ENCODE measurements at regions of chrX and their contacts with region 1.

Region 1: DNA sequence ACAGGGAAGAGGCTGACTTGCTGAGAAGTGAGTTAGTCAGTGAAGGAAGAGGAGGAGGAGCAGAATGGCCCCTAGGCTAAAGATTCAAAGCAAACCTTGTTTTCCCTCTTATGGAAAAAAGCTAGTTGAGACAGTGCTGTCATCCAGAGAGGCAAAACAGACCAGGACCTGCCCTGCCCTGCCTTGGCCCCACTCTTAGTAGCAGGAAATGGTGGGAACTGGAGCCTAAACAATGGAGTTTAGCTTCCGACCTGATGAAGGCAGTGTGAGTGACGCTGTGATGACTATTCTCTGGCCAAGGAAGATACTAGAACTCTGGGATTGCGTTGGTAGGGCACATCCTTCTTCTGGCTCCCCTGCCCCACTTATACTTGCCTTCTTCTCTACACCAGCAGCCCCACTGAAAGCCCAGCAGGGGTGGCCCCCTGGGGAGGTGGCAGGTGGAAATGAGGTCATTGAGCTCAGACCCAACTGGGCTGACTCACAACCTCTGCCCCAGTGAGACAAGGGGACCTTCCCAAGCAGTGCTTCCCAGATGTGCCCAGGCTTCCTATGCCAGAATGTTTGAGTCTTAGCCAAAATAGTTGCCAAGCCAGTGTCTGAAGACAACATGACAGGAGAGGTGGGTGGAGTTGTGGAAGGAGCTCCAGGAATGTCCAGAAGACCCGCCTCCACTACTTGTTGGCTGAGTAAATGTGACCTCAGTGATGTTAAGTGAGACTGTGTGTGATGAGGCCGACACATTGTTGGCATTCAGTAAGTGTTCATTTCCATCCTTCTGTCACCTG is 38.8 kb downstream of the MSN start:
- DNase-seq: peak in 1 of 5 donors; percentile 75
- H3K4me3 ChIP-seq: peak overlapping the region in 1 of 2 donors; percentile 15
- H3K4me3 Mint-ChIP-seq: peak overlapping the region in 7 of 8 donors; percentile 32 to 82 (median 63)
- H3K27ac ChIP-seq: peak overlapping the region; percentile 61
- H3K27ac Mint-ChIP-seq: peak overlapping the region; percentile 85 to 97 (median 92)
- H3K4me1 ChIP-seq: peaks cover 71% of the 10 kb centered on the region
- H3K4me1 Mint-ChIP-seq: peaks cover 51 to 82% (median 68%) of the 10 kb centered on the region in 4 donors
- H3K27me3 ChIP-seq: no peaks in the 10 kb centered on the region
- H3K27me3 Mint-ChIP-seq: no peaks in the 10 kb centered on the region

Region 2: GRCh38 chrX:65601530-65602220 is 104.6 kb before region 1 on chrX:
- CTCF ChIA-PET with region 1: interaction called, 14 read pairs
- POLR2A ChIA-PET with region 1: interaction called, 11 read pairs
- intact Hi-C with region 1: no loop called
- DNase-seq: peak; percentile 47 to 75 (median 60)
- H3K4me3 ChIP-seq: no peak overlapping the region
- H3K4me3 Mint-ChIP-seq: peak overlapping the region; percentile 45 to 89 (median 70)
- H3K27ac ChIP-seq: peak overlapping the region; percentile 42
- H3K27ac Mint-ChIP-seq: peak overlapping the region; percentile 89 to 96 (median 93)
- H3K4me1 ChIP-seq: peaks cover 74% of the 10 kb centered on the region
- H3K4me1 Mint-ChIP-seq: peaks cover 46 to 89% (median 73%) of the 10 kb centered on the region in 4 donors
- H3K27me3 ChIP-seq: no peaks in the 10 kb centered on the region
- H3K27me3 Mint-ChIP-seq: no peaks in the 10 kb centered on the region

Region 3: DNA sequence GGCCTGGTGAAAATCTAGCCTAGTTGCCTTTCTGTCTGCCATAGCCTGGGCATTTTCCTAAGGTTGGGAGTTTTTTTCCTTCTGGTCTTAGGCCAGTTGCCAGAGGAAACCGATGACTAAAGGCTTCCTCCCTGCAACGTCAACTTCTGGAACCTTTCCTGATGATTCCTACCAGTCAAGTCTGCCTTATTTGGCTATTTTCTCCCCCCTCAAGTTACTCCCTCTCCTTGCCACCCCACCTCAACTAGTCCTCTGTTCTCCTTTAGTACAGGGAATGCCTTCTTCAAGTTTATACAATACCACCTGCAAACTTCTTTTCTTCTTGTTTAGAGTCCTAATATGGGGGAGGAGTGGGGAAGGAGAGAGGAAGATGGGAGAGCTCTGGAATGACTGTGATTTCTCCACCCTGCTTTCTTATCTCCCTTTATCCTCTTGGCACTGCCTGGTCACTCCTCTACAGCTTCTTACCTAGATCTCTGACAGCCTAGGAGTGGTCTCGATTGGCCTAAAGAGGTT is 28.2 kb before region 1 on chrX:
- CTCF ChIA-PET with region 1: interaction called, 12 read pairs
- POLR2A ChIA-PET with region 1: interaction called, 6 read pairs
- intact Hi-C with region 1: no loop called
- DNase-seq: no peak
- H3K4me3 ChIP-seq: no peak overlapping the region
- H3K4me3 Mint-ChIP-seq: peak overlapping the region in 7 of 8 donors; percentile 57 to 83 (median 70)
- H3K27ac ChIP-seq: no peak overlapping the region
- H3K27ac Mint-ChIP-seq: peak overlapping the region; percentile 2 to 92 (median 68)
- H3K4me1 ChIP-seq: peaks cover 100% of the 10 kb centered on the region
- H3K4me1 Mint-ChIP-seq: peaks cover 65 to 97% (median 78%) of the 10 kb centered on the region in 4 donors
- H3K27me3 ChIP-seq: no peaks in the 10 kb centered on the region
- H3K27me3 Mint-ChIP-seq: no peaks in the 10 kb centered on the region